IMR-90 (cell line): ENCODE measurements at regions of chr5 and their contacts with region 1.

Region 1: DNA sequence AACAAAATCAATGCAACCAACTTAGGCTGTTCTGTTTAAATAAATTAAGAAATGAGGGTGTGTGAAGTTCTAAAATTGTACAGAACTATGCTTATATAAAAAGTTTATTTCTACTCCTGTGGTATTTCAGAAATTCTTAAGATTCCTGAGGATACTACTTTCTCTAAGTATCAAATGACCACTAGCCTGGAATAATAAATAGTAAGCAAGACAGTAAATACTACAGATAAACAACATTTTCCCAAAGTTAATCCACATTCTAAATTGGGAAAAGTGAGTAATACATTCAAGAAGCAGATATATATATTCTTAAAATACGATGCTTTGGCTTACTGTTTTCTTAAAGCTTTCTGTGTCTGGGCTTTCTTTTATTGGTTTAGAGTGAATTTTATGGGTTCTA is 29.5 kb downstream of the CCNH start:
- DNase-seq: peak; percentile 82
- ATAC-seq: peak; percentile 95
- H3K4me3 ChIP-seq: no peak overlapping the region
- H3K27ac ChIP-seq: no peak overlapping the region
- H3K4me1 ChIP-seq: peaks cover 5% of the 10 kb centered on the region
- H3K27me3 ChIP-seq: no peaks in the 10 kb centered on the region
- CTCF ChIP-seq: no peak
- POLR2A ChIP-seq: no peak
- RAD21 ChIP-seq: no peak

Region 2: GRCh38 chr5:87008751-87009560 is 374.3 kb before region 1 on chr5:
- CTCF ChIA-PET with region 1: no interaction called
- POLR2A ChIA-PET with region 1: no interaction called
- dilution Hi-C with region 1: no loop called
- in situ Hi-C with region 1: no loop called
- intact Hi-C with region 1: no loop called
- DNase-seq: peak; percentile 24
- ATAC-seq: peak; percentile 65
- H3K4me3 ChIP-seq: no peak overlapping the region
- H3K27ac ChIP-seq: no peak overlapping the region
- H3K4me1 ChIP-seq: peaks cover 2% of the 10 kb centered on the region; the same call in 1 of the 2 replicates
- H3K27me3 ChIP-seq: no peaks in the 10 kb centered on the region
- CTCF ChIP-seq: no peak
- POLR2A ChIP-seq: no peak
- RAD21 ChIP-seq: no peak

Region 3: DNA sequence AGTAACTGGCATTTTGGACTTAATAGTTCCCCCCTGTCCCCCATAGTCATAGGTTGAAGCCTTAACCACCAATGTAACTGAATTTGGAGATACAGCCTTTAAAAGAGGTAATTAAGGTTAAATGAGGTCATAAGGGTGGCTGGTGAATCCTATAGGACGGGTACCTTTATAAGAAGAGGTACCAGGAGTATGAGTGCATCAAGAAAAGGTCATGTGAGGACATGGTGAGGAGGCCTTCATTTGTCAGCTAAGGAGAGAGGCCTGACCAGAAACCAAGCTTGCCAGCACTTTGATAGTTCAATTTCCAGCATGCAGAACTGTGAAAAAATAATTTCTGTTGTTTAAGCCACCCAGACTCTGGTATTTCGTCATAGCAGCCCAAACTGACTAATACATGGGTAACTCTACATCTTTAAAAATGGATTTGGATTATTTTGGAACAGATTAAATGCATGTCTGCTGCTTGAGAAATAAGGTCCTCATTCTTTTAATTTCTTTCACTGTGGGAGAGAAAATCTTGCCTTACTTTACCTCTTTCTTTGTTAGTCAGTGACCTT is 105.9 kb before region 1 on chr5:
- CTCF ChIA-PET with region 1: no interaction called
- POLR2A ChIA-PET with region 1: interaction called, 12 read pairs
- dilution Hi-C with region 1: no loop called
- in situ Hi-C with region 1: no loop called
- intact Hi-C with region 1: no loop called
- DNase-seq: peak; percentile 30
- ATAC-seq: peak; percentile 61
- H3K4me3 ChIP-seq: no peak overlapping the region
- H3K27ac ChIP-seq: no peak overlapping the region
- H3K4me1 ChIP-seq: peaks cover 5% of the 10 kb centered on the region
- H3K27me3 ChIP-seq: no peaks in the 10 kb centered on the region
- CTCF ChIP-seq: no peak
- POLR2A ChIP-seq: no peak
- RAD21 ChIP-seq: no peak